ENCODE measurements at regions of chr6 and their contacts with region 1.

Region 1: DNA sequence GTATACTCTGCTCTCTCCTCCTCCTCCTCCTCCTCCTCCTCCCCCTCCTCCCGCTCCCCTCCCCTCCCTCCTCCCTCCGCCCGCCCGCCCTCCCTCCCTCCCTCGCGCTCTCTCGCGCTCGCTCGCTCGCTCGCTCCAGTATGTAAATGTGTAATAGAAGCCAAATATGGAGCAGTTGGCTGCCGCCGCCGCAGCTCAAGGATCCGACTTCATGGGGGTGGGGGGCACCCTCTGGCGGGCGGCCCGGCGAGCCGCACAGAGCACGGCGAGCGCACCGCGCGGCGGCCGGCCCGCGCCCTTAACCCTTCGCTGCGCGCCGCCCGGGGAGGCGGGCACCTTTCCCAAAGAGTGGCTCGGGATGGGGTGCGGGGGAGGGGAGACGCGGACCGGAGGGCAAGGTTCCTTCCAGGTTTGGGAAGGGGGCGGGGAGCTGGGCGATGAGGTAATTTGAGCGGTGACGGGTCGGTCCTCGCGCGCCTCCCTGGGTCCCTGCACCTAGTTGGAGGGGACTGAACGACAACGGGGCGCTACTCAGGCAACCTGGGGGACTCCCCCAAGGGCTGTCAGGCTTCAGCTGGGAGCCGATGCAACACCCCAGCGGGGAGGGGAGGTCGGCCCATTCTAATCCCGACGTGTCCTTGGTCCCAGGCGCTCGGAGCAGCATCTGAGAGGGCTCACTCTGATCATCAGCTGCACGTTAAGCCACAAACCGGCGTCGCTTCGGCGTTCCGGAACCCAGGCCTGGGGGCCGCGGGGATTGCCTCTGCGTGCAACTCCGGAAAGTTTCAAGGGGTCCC is 409 bp upstream of the ATXN1 start:
- DNase-seq: peak; percentile 68 to 92 (median 81)
- ATAC-seq: peak; percentile 72
- H3K4me3 ChIP-seq: peak overlapping the region; percentile 91
- H3K4me3 Mint-ChIP-seq: peak overlapping the region; percentile 87 to 100 (median 98)
- H3K27ac ChIP-seq: peak overlapping the region; percentile 95
- H3K27ac Mint-ChIP-seq: peak overlapping the region; percentile 95 to 100 (median 97)
- H3K4me1 ChIP-seq: peaks cover 7 to 34% of the 10 kb centered on the region in 2 donors
- H3K4me1 Mint-ChIP-seq: peaks cover 18 to 61% (median 42%) of the 10 kb centered on the region in 7 donors
- H3K27me3 ChIP-seq: no peaks in the 10 kb centered on the region
- H3K27me3 Mint-ChIP-seq: peaks cover 0 to 4% (median 0%) of the 10 kb centered on the region in 5 donors

Region 2: GRCh38 chr6:16332175-16332542 is 429.5 kb before region 1 on chr6:
- CTCF ChIA-PET with region 1: interaction called, 6 read pairs
- POLR2A ChIA-PET with region 1: interaction called, 4 read pairs
- intact Hi-C with region 1: loop called (anchors 1 kb)
- DNase-seq: peak; percentile 51 to 80 (median 73)
- ATAC-seq: peak; percentile 96
- H3K4me3 ChIP-seq: peak overlapping the region; percentile 19
- H3K4me3 Mint-ChIP-seq: no peak overlapping the region
- H3K27ac ChIP-seq: peak overlapping the region; percentile 32
- H3K27ac Mint-ChIP-seq: no peak overlapping the region
- H3K4me1 ChIP-seq: peaks cover 12 to 13% of the 10 kb centered on the region in 2 donors
- H3K4me1 Mint-ChIP-seq: peaks cover 0 to 6% (median 0%) of the 10 kb centered on the region in 7 donors
- H3K27me3 ChIP-seq: no peaks in the 10 kb centered on the region
- H3K27me3 Mint-ChIP-seq: no peaks in the 10 kb centered on the region

Region 3: GRCh38 chr6:16514249-16514648 is 247.4 kb before region 1 on chr6:
- CTCF ChIA-PET with region 1: interaction called, 13 read pairs
- POLR2A ChIA-PET with region 1: no interaction called
- intact Hi-C with region 1: loop called (anchors 1 to 2 kb)
- DNase-seq: peak in 6 of 9 donors; percentile 16 to 31 (median 24)
- ATAC-seq: peak; percentile 59
- H3K4me3 ChIP-seq: no peak overlapping the region
- H3K4me3 Mint-ChIP-seq: peak overlapping the region in 1 of 10 donors; percentile 41
- H3K27ac ChIP-seq: no peak overlapping the region
- H3K27ac Mint-ChIP-seq: peak overlapping the region in 7 of 9 donors; percentile 10 to 56 (median 40)
- H3K4me1 ChIP-seq: peaks cover 14 to 29% of the 10 kb centered on the region in 2 donors
- H3K4me1 Mint-ChIP-seq: peaks cover 29 to 73% (median 58%) of the 10 kb centered on the region in 7 donors
- H3K27me3 ChIP-seq: no peaks in the 10 kb centered on the region
- H3K27me3 Mint-ChIP-seq: no peaks in the 10 kb centered on the region

Region 4: GRCh38 chr6:16704401-16705045 is 57.1 kb before region 1 on chr6:
- CTCF ChIA-PET with region 1: interaction called, 4 read pairs
- POLR2A ChIA-PET with region 1: no interaction called
- intact Hi-C with region 1: loop called in 1 of 2 experiments (anchors 2 kb)
- DNase-seq: peak in 1 of 9 donors; percentile 58
- ATAC-seq: peak; percentile 49
- H3K4me3 ChIP-seq: peak overlapping the region; percentile 21
- H3K4me3 Mint-ChIP-seq: peak overlapping the region; percentile 19 to 82 (median 58)
- H3K27ac ChIP-seq: no peak overlapping the region
- H3K27ac Mint-ChIP-seq: peak overlapping the region in 3 of 9 donors; percentile 12 to 81 (median 65)
- H3K4me1 ChIP-seq: peaks cover 10 to 48% of the 10 kb centered on the region in 2 donors
- H3K4me1 Mint-ChIP-seq: peaks cover 47 to 64% (median 57%) of the 10 kb centered on the region in 7 donors
- H3K27me3 ChIP-seq: no peaks in the 10 kb centered on the region
- H3K27me3 Mint-ChIP-seq: no peaks in the 10 kb centered on the region

Region 5: GRCh38 chr6:16964553-16965501 is 203.2 kb after region 1 on chr6:
- CTCF ChIA-PET with region 1: no interaction called
- POLR2A ChIA-PET with region 1: no interaction called
- intact Hi-C with region 1: loop called in 1 of 2 experiments (anchors 1 kb)
- DNase-seq: peak in 8 of 9 donors; percentile 8 to 66 (median 24)
- ATAC-seq: peak; percentile 90
- H3K4me3 ChIP-seq: peak overlapping the region; percentile 2
- H3K4me3 Mint-ChIP-seq: peak overlapping the region in 1 of 10 donors; percentile 5
- H3K27ac ChIP-seq: no peak overlapping the region
- H3K27ac Mint-ChIP-seq: no peak overlapping the region
- H3K4me1 ChIP-seq: no peaks in the 10 kb centered on the region
- H3K4me1 Mint-ChIP-seq: peaks cover 4 to 10% (median 5%) of the 10 kb centered on the region in 7 donors
- H3K27me3 ChIP-seq: no peaks in the 10 kb centered on the region
- H3K27me3 Mint-ChIP-seq: peaks cover 13 to 28% (median 24%) of the 10 kb centered on the region in 5 donors

Region 6: DNA sequence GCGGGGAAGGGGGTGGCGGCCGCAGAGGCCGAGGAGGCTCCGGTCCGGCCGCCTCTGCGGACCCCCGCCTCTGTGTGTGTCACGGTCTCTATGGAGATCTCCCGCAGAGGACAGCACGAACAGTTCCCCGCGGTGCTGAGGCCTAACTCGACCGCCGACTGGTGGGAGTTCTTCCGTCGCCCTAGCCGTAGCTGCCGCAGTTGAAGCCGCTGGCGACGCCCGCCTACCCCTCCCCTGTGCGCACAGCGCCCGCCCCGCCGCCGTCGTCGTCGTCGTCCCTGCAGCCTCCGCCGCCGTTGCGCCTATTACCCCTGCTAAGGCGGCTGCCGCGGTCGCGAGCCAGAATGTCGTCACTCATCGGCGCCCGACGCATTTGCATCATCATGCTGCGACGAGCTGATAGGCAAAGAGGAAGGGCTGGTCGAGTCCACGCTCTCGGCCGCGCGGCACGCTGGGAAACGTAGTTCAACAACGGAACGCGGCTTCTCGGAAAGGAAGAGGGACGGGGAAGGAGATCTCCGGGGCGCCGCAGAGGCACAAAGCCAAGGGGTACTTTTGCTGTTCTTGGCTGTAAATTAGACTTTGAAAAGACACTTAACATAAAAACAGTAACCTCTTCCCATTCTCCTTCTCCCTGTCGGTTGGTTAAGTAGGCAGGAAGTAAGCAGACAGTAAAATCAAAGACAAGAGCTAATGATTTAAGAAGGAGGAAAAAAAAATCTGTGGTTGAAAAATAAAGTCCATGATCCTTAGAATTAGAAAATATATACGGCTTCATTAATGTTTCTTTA is 945.1 kb after region 1 on chr6 and contains the start of gene NUP153:
- CTCF ChIA-PET with region 1: no interaction called
- POLR2A ChIA-PET with region 1: no interaction called
- intact Hi-C with region 1: loop called (anchors 1 to 5 kb)
- DNase-seq: peak; percentile 98 to 100 (median 99)
- ATAC-seq: peak; percentile 85
- H3K4me3 ChIP-seq: peak within 1 kb of the TSS; percentile 94
- H3K4me3 Mint-ChIP-seq: peak within 1 kb of the TSS; percentile 86 to 97 (median 94)
- H3K27ac ChIP-seq: peak within 1 kb of the TSS; percentile 100
- H3K27ac Mint-ChIP-seq: peak within 1 kb of the TSS; percentile 92 to 98 (median 95)
- H3K4me1 ChIP-seq: peaks cover 24 to 28% of the 10 kb centered on the region in 2 donors
- H3K4me1 Mint-ChIP-seq: peaks cover 13 to 53% (median 37%) of the 10 kb centered on the region in 7 donors
- H3K27me3 ChIP-seq: no peaks in the 10 kb centered on the region
- H3K27me3 Mint-ChIP-seq: peaks cover 0 to 2% (median 0%) of the 10 kb centered on the region in 5 donors
- total RNA-seq, gene NUP153: 47.7 to 90.9 (median 53.0) TPM

Measured in naive thymus-derived CD4-positive, alpha-beta T cell (primary cell).